Mammary epithelial cell (primary cell): ENCODE measurements at regions of chr3 and their contacts with region 1.

Region 1: DNA sequence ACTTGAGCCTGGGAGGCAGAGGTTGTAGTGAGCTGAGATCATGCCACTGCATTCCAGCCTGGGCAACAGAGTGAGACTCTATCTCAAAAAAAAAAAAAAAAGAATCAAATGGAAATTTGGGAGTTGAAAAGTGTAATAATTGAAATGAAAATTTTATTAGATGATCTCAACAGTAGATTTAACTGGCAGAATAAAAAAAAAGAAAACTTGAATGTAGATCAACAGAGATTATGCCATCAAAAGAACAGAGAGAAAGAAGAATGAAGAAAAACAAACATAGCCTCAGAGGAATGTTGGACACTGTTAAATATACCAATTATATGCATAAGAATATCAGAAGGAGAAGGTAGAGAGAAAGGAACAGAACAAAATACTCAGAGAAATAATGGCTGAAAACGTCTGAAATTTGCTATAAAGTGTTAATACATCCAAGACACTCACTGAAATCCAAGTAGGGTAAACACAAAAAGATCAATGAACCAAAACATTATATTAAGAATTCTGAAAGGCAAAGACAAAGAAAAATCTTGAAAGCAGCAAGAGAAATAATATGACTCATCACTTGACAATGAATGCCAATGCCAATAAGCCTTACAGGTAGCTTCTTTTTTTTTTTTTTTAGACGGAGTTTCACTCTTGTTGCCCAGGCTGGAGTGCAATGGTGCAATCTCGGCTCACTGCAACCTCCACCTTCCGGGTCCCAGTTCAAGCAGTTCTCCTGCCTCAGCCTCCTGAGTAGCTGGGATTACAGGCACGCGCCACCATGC is 14.6 kb upstream of the ELP6 start:
- DNase-seq: peak; percentile 56
- H3K4me3 ChIP-seq: no peak overlapping the region
- H3K27ac ChIP-seq: peak overlapping the region; percentile 44
- H3K4me1 ChIP-seq: no peaks in the 10 kb centered on the region
- H3K27me3 ChIP-seq: no peaks in the 10 kb centered on the region
- CTCF ChIP-seq: no peak

Region 2: GRCh38 chr3:47266709-47267489 is 261.2 kb before region 1 on chr3:
- CTCF ChIA-PET with region 1: no interaction called
- dilution Hi-C with region 1: no loop called
- in situ Hi-C with region 1: no loop called
- intact Hi-C with region 1: no loop called
- DNase-seq: peak; percentile 93
- H3K4me3 ChIP-seq: no peak overlapping the region
- H3K27ac ChIP-seq: no peak overlapping the region
- H3K4me1 ChIP-seq: peaks cover 12% of the 10 kb centered on the region
- H3K27me3 ChIP-seq: no peaks in the 10 kb centered on the region
- CTCF ChIP-seq: no peak

Region 3: DNA sequence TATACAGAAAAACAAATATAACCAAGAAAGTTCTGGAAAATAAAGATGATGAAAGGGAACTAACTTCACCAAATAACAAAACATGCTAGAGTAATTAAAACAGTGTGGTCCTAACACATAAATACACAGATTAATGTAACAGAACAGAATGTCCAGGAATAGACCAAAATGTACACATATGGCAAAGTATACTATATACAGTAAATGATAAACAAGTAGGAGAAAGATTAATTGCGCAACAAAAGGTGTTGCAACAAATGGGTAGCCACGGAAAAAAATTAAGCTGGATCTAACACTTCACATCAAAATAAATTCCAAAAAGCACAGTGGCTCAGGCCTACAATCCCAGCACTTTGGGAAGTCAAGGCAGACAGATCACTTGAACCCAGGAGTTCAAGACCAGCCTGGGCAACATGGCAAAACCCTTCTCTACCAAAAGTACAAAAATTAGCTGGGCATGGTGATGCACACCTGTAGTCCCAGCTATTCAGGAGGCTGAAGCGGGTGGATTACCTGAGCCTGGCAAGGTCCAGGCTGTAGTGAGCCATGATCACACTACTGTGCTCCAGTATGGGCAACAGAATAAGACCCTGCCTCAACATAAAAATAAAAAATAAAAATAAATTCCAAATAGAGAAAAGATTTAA is 72.2 kb before region 1 on chr3:
- CTCF ChIA-PET with region 1: no interaction called
- dilution Hi-C with region 1: no loop called
- in situ Hi-C with region 1: no loop called
- intact Hi-C with region 1: no loop called
- DNase-seq: no peak
- H3K4me3 ChIP-seq: no peak overlapping the region
- H3K27ac ChIP-seq: no peak overlapping the region
- H3K4me1 ChIP-seq: no peaks in the 10 kb centered on the region
- H3K27me3 ChIP-seq: no peaks in the 10 kb centered on the region
- CTCF ChIP-seq: no peak

Region 4: DNA sequence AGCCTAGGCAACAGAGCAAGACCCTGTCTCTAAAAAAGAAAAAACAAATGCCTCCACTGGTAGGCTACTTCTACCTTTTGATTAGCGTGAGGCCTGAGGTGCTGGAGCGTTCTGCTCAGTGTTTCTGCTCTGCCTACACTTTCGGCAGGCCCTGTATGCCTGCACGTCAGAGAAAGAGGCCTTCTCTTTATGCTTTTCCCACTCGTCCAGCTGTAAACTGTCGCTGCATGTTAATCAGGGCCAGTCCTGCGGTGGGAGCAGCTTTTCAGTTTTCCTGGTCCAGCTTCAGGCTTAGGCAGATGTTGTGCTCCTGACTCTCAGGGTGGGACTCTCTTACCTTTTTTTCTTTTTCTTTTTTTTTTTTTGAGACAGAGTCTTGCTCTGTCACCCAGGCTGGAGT is 25.3 kb after region 1 on chr3:
- CTCF ChIA-PET with region 1: interaction called, 11 read pairs
- dilution Hi-C with region 1: no loop called
- in situ Hi-C with region 1: no loop called
- intact Hi-C with region 1: no loop called
- DNase-seq: no peak
- H3K4me3 ChIP-seq: no peak overlapping the region
- H3K27ac ChIP-seq: no peak overlapping the region
- H3K4me1 ChIP-seq: no peaks in the 10 kb centered on the region
- H3K27me3 ChIP-seq: no peaks in the 10 kb centered on the region
- CTCF ChIP-seq: no peak